MCF 10A (cell line): ENCODE measurements at regions of chr4 and their contacts with region 1.

Region 1: GRCh38 chr4:102610007-102610406 is 108.8 kb downstream of the NFKB1 start:
- DNase-seq: no peak
- H3K4me3 Mint-ChIP-seq: no peak overlapping the region
- H3K27ac Mint-ChIP-seq: peak overlapping the region; percentile 16
- H3K4me1 Mint-ChIP-seq: peaks cover 16% of the 10 kb centered on the region
- H3K27me3 Mint-ChIP-seq: no peaks in the 10 kb centered on the region
- CTCF ChIP-seq: peak; percentile 16

Region 2: DNA sequence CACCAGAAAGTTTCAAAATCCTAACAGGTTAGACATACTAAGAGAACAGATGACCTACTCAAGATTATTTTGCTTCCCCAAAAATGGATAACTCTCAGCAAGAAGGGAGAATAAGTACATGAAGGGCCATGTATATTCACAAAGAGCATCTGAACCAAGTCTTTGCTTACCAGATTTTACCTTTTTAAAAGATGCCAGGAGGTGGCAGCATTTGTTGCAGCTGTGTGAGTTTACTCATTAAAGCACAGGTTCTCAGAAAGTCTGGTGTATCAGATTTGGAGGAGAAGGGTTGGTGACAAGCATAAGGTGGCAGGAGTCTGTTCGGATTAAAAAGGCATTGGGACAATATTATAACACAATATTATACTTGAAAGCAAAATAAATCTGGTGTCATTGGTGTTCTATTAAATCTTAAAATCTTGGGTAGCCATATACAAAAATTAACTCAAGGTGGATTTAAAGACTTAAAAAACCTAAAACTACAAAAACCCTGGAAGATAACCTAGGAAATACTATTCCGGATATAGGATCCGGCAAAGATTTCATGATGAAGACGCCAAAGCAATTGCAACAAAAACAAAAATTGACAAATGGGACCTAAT is 160.2 kb before region 1 on chr4:
- CTCF ChIA-PET with region 1: interaction called, 10 read pairs
- POLR2A ChIA-PET with region 1: no interaction called
- intact Hi-C with region 1: loop called (anchors 5 kb)
- DNase-seq: peak; percentile 72
- H3K4me3 Mint-ChIP-seq: no peak overlapping the region
- H3K27ac Mint-ChIP-seq: no peak overlapping the region
- H3K4me1 Mint-ChIP-seq: no peaks in the 10 kb centered on the region
- H3K27me3 Mint-ChIP-seq: no peaks in the 10 kb centered on the region
- CTCF ChIP-seq: peak; percentile 63